ENCODE measurements at regions of chr2 and their contacts with region 1.

Region 1: DNA sequence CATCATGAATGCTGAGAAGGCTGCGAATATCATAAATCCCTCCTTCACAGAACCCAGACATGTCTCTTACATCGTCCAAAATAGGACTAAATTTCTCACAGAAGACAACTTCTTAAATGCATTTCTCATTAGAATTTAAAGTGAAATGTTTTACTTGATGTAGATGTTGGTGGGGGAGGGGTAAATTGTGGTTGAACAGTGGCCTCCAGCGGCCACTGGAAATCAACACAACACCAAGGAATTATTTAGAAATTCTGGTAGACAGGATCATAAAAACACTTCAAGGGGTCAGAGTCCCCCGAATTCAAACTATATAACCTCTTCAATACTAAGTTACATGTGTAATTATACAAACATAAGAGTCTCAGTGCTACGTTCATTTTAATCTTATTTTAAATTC is 135.9 kb downstream of the ABCA12 start:
- DNase-seq: no peak
- ATAC-seq: no peak
- H3K4me3 ChIP-seq: no peak overlapping the region
- H3K27ac ChIP-seq: no peak overlapping the region
- H3K4me1 ChIP-seq: no peaks in the 10 kb centered on the region
- H3K27me3 ChIP-seq: peaks cover 0 to 5% (median 0%) of the 10 kb centered on the region in 3 donors
- CTCF ChIP-seq: peak; percentile 50

Region 2: GRCh38 chr2:213806125-213806726 is 1196.3 kb before region 1 on chr2:
- intact Hi-C with region 1: loop called in 1 of 2 experiments (anchors 10 kb)
- DNase-seq: no peak
- ATAC-seq: no peak
- H3K4me3 ChIP-seq: no peak overlapping the region
- H3K27ac ChIP-seq: no peak overlapping the region
- H3K4me1 ChIP-seq: no peaks in the 10 kb centered on the region
- H3K27me3 ChIP-seq: no peaks in the 10 kb centered on the region
- CTCF ChIP-seq: peak; percentile 49

Region 3: DNA sequence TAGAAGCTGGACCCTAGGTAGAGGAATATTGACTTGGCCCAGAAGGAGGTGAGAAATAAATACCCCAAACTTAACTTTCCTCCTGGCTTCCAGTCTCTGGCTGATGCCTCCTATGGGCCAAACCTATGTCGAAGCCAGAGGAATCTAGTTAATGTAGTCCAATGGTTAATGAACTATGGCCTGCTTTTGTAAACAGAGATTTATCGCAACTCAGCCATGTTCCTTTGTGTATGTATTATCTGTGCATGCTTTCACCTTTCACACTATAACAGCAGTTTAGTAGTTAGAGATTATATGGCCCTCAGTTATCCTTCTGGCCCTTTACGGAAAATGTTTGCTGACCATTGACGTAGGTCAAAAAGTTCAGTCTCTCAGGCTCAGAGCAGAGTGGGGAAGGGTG is 125.7 kb before region 1 on chr2:
- intact Hi-C with region 1: no loop called
- DNase-seq: no peak
- ATAC-seq: no peak
- H3K4me3 ChIP-seq: no peak overlapping the region
- H3K27ac ChIP-seq: no peak overlapping the region
- H3K4me1 ChIP-seq: no peaks in the 10 kb centered on the region
- H3K27me3 ChIP-seq: no peaks in the 10 kb centered on the region
- CTCF ChIP-seq: no peak

Measured in psoas muscle (tissue), 8 donors.